SK-N-SH (cell line): ENCODE measurements at regions of chr1 and their contacts with region 1.

Region 1: DNA sequence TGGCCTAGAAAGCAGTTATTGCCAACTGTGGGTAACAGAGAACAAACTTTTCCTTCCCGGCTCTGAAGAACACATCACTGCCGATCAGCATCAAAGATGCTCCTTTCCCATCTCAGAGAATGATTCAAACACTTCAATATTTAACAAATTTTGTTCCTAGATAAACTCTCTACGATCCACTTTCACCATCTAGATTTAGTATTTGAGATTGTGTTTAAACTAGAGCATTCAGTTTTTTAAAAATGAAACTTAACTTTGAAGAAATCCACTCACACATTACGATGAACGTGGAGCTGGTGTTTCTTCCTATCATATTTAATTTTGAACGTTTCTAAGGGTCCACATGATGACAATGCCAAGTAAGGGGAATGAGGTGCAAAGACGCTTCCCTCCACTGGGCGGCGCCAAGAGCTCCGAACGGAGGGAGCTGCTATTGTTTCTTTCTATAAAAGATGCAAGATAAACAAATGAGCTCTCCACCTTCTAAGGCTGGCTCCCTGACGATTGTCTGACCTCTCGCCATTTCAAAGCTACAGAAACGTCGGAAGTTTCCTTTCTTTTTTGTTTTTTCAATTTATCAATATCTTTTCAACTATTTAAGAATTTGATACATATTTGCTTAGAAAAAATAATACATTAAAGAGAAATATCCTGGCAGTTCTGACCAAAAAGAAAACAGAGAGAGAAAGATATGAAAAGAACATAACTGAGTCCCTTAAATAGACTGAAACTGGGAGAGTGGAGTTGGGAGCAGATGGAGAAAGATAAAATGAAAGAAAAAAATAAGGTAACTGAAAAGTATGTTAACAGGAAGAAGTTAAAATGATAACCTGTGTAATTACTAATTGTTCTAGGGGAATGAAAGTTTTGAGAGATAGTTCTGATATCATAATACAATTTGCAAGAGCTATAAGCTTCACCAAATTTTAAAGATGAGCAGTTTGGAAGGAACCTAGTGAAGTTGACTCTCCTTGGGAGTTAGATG is 4.4 kb upstream of the BARHL2 start:
- DNase-seq: peak; percentile 81
- H3K4me3 ChIP-seq: no peak overlapping the region; a peak in 1 of 4 replicates
- H3K27ac ChIP-seq: no peak overlapping the region
- H3K4me1 ChIP-seq: peaks cover 3 to 12% of the 10 kb centered on the region in 2 experiments; a peak in 2 of 4 replicates
- H3K27me3 ChIP-seq: peaks cover 90% of the 10 kb centered on the region
- CTCF ChIP-seq: peak; percentile 85
- EP300 ChIP-seq: no peak
- RAD21 ChIP-seq: peak; percentile 72

Region 2: GRCh38 chr1:90579212-90579802 is 142.2 kb before region 1 on chr1:
- CTCF ChIA-PET with region 1: no interaction called
- POLR2A ChIA-PET with region 1: no interaction called
- DNase-seq: peak; percentile 45
- H3K4me3 ChIP-seq: no peak overlapping the region
- H3K27ac ChIP-seq: no peak overlapping the region
- H3K4me1 ChIP-seq: no peaks in the 10 kb centered on the region
- H3K27me3 ChIP-seq: no peaks in the 10 kb centered on the region; the same call in 1 of the 2 replicates
- CTCF ChIP-seq: peak; percentile 78
- EP300 ChIP-seq: no peak
- RAD21 ChIP-seq: peak; percentile 63

Region 3: GRCh38 chr1:90707363-90707710 is 14.2 kb before region 1 on chr1:
- CTCF ChIA-PET with region 1: interaction called, 23 read pairs
- POLR2A ChIA-PET with region 1: interaction called, 4 read pairs
- DNase-seq: no peak
- H3K4me3 ChIP-seq: no peak overlapping the region; a peak in 1 of 4 replicates
- H3K27ac ChIP-seq: no peak overlapping the region
- H3K4me1 ChIP-seq: no peaks in the 10 kb centered on the region; a peak in 2 of 4 replicates
- H3K27me3 ChIP-seq: peaks cover 78% of the 10 kb centered on the region
- CTCF ChIP-seq: no peak
- EP300 ChIP-seq: no peak
- RAD21 ChIP-seq: no peak

Region 4: DNA sequence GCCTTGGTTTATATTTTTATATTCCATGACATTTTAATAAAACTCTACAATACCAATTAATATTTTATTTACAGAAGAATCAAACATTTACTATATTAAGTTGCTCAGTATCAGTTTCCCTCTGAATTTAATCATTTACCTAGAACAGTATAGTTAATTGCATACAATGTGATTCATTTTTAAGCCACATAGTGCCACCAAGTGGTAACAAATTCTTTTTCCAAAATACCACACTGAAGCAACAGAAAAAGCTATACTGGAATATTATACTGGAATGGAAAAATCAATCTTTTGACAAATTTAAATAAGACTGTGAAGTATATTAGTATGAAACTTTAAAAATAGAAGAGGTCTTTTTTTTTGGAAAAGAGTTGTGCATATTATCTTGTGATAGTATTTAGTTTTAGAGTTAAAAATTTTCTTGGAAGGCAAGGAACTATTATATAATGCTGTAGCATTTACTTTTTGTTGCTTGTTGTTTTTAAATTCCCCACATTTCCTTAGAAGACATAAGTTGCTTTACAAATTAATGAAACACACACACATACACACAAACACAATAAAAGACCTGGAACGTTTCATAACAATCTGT is 243.0 kb after region 1 on chr1:
- CTCF ChIA-PET with region 1: interaction called, 32 read pairs
- POLR2A ChIA-PET with region 1: no interaction called
- DNase-seq: no peak
- H3K4me3 ChIP-seq: no peak overlapping the region
- H3K27ac ChIP-seq: no peak overlapping the region
- H3K4me1 ChIP-seq: no peaks in the 10 kb centered on the region; a peak in 1 of 4 replicates
- H3K27me3 ChIP-seq: no peaks in the 10 kb centered on the region
- CTCF ChIP-seq: peak; percentile 67
- EP300 ChIP-seq: no peak
- RAD21 ChIP-seq: peak; percentile 74